Activated T-helper 2 cell treated with anti-CD3 and anti-CD28 coated beads, Interferon-gamma antibody, Interleukin-2, Interleukin-4, amounts not matched to agents 10 μg/mL and 5 μg/mL and 100 μg/mL, durations not matched to agents 14 hours and 24 hours and 36 hours (primary cell): ENCODE measurements at regions of chr5 and their contacts with region 1.

Region 1: DNA sequence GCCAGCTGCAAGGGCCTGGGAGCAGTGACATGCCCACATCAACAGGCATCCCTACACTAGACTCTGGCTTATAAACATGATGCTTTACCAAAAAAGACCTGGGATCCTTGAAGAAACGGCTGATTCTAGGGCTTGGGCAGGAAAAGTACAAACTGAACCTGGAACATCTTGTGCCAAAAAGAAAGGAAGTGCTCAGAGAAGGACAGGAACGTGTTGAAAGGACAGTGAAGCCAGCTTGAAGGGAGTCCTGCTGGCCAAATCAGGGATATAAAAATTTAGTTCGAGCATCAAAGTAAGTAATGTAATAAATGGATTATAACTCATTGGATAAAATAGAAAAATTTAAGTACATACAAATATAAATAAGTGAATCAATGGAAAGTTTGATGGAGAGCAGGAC is 58.1 kb downstream of the ALDH7A1 start:
- DNase-seq: no peak
- H3K4me3 Mint-ChIP-seq: no peak overlapping the region
- H3K27ac Mint-ChIP-seq: no peak overlapping the region
- H3K4me1 Mint-ChIP-seq: no peaks in the 10 kb centered on the region
- H3K27me3 Mint-ChIP-seq: peaks cover 3% of the 10 kb centered on the region

Region 2: GRCh38 chr5:126300293-126300692 is 236.6 kb before region 1 on chr5:
- intact Hi-C with region 1: no loop called
- DNase-seq: no peak
- H3K4me3 Mint-ChIP-seq: no peak overlapping the region
- H3K27ac Mint-ChIP-seq: no peak overlapping the region
- H3K4me1 Mint-ChIP-seq: no peaks in the 10 kb centered on the region
- H3K27me3 Mint-ChIP-seq: no peaks in the 10 kb centered on the region

Region 3: GRCh38 chr5:126332326-126332725 is 204.5 kb before region 1 on chr5:
- intact Hi-C with region 1: no loop called
- DNase-seq: no peak
- H3K4me3 Mint-ChIP-seq: no peak overlapping the region
- H3K27ac Mint-ChIP-seq: no peak overlapping the region
- H3K4me1 Mint-ChIP-seq: no peaks in the 10 kb centered on the region
- H3K27me3 Mint-ChIP-seq: peaks cover 2% of the 10 kb centered on the region

Region 4: GRCh38 chr5:126499853-126500342 is 37.0 kb before region 1 on chr5:
- intact Hi-C with region 1: loop called (anchors 5 kb)
- DNase-seq: no peak
- H3K4me3 Mint-ChIP-seq: no peak overlapping the region
- H3K27ac Mint-ChIP-seq: no peak overlapping the region
- H3K4me1 Mint-ChIP-seq: peaks cover 6% of the 10 kb centered on the region
- H3K27me3 Mint-ChIP-seq: no peaks in the 10 kb centered on the region

Region 5: DNA sequence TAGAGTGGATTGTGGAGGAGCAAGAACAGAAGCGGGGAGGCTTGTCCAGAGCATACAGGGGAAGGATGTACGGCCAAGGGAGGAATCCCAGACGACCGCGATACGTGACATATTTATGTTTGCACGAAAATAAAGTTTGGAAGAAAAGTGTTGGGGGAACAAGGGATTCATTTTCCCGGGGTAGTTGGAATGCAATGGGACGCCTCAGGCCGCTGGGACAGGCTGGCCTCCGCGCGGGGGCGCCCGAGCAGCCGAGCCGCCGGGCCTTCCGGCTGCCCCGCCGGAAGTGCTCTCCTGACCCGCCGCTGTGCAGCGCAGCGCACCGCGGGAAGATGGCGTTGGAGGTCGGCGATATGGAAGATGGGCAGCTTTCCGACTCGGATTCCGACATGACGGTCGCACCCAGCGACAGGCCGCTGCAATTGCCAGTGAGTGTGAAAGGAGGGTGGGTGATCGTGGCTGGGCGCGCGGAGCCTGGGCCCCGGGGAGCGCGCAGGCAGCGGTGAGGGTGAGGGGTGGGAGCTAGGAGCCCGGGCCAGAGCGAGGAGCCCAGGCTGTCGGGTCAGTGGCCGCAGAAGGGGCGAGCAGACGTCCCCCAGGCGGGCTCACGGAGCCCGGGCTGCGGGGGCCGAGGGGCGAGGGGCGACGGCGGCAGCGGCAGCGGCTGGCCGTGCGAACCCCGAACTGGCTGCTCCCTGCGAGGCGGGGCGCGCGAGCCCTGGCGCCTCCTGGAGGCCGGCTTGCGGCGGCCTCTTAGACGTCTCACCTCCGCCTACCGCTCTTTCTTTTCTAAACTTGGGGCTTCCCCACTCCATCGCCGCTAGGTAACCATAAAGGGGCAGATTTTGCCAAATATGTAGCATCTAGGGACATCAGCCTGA is 64.0 kb after region 1 on chr5 and contains the start of gene PHAX:
- intact Hi-C with region 1: loop called (anchors 2 kb)
- DNase-seq: peak; percentile 64
- H3K4me3 Mint-ChIP-seq: peak within 1 kb of the TSS; percentile 94
- H3K27ac Mint-ChIP-seq: peak within 1 kb of the TSS; percentile 95
- H3K4me1 Mint-ChIP-seq: peaks cover 22% of the 10 kb centered on the region
- H3K27me3 Mint-ChIP-seq: peaks cover 2% of the 10 kb centered on the region
- total RNA-seq, gene PHAX: 45.3 and 47.7 TPM in 2 replicates